ENCODE measurements at regions of chr21 and their contacts with region 1.

Region 1: DNA sequence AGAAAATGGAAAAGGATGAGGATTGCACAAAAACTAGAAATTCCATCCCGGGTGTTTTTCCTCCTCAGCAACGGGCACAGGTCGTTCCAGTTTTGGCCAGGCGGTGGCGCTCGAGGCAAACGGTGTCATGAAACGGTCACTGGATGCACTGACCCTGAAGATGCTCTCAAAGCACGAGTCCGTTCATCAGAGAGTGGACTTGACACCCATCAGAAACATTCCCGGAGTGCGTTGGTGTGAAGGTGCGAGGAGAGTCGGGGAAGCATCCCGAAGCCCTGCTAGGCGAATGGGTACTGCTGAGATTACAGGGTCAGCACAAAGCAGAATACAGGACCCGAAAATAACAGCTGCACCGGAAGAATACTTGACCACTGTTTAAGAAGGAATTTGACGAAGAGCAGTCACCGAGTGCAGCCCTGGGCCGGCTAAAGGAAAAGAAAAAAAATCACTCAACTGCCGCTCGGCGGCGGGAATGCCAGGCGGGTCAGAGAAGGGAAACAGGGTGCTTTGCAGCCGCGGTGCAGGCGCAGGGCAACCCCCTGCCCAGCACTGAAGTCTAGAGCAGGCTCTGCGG is 71.7 kb upstream of the ETS2 start:
- DNase-seq: peak; percentile 8
- H3K4me3 ChIP-seq: peak overlapping the region; percentile 24 to 59 (median 38)
- H3K27ac ChIP-seq: peak overlapping the region; percentile 60 to 79 (median 74)
- H3K4me1 ChIP-seq: peaks cover 0 to 31% (median 5%) of the 10 kb centered on the region in 3 donors
- H3K27me3 ChIP-seq: no peaks in the 10 kb centered on the region
- CTCF ChIP-seq: peak; percentile 79 to 97 (median 94)
- POLR2A ChIP-seq: no peak

Region 2: GRCh38 chr21:39137248-39138178 is 403.5 kb after region 1 on chr21:
- intact Hi-C with region 1: loop called (anchors 5 kb)
- DNase-seq: no peak
- H3K4me3 ChIP-seq: no peak overlapping the region
- H3K27ac ChIP-seq: peak overlapping the region in 3 of 4 donors; percentile 1 to 45 (median 38)
- H3K4me1 ChIP-seq: peaks cover 0 to 25% (median 11%) of the 10 kb centered on the region in 3 donors
- H3K27me3 ChIP-seq: no peaks in the 10 kb centered on the region
- CTCF ChIP-seq: no peak
- POLR2A ChIP-seq: no peak

Measured in esophagus squamous epithelium (tissue), 5 donors.